ENCODE measurements at regions of chr4 and their contacts with region 1.

Region 1: GRCh38 chr4:59608466-59608865 is 1591.7 kb upstream of the ADGRL3 start:
- DNase-seq: no peak
- ATAC-seq: no peak
- H3K4me3 ChIP-seq: no peak overlapping the region
- H3K4me3 Mint-ChIP-seq: no peak overlapping the region
- H3K27ac ChIP-seq: no peak overlapping the region
- H3K27ac Mint-ChIP-seq: no peak overlapping the region
- H3K4me1 ChIP-seq: no peaks in the 10 kb centered on the region
- H3K4me1 Mint-ChIP-seq: no peaks in the 10 kb centered on the region
- H3K27me3 ChIP-seq: no peaks in the 10 kb centered on the region
- H3K27me3 Mint-ChIP-seq: no peaks in the 10 kb centered on the region

Region 2: GRCh38 chr4:59656020-59656471 is 47.6 kb after region 1 on chr4:
- CTCF ChIA-PET with region 1: no interaction called
- POLR2A ChIA-PET with region 1: interaction called in 1 of 2 experiments, 13 read pairs
- DNase-seq: no peak
- ATAC-seq: no peak
- H3K4me3 ChIP-seq: no peak overlapping the region
- H3K4me3 Mint-ChIP-seq: no peak overlapping the region
- H3K27ac ChIP-seq: no peak overlapping the region
- H3K27ac Mint-ChIP-seq: no peak overlapping the region
- H3K4me1 ChIP-seq: no peaks in the 10 kb centered on the region
- H3K4me1 Mint-ChIP-seq: no peaks in the 10 kb centered on the region
- H3K27me3 ChIP-seq: no peaks in the 10 kb centered on the region
- H3K27me3 Mint-ChIP-seq: no peaks in the 10 kb centered on the region

Measured in T-cell (primary cell).